Activated B cell treated with CpG ODN at 0.5 μM for 24 hours (primary cell): ENCODE measurements at regions of chr22 and their contacts with region 1.

Region 1: DNA sequence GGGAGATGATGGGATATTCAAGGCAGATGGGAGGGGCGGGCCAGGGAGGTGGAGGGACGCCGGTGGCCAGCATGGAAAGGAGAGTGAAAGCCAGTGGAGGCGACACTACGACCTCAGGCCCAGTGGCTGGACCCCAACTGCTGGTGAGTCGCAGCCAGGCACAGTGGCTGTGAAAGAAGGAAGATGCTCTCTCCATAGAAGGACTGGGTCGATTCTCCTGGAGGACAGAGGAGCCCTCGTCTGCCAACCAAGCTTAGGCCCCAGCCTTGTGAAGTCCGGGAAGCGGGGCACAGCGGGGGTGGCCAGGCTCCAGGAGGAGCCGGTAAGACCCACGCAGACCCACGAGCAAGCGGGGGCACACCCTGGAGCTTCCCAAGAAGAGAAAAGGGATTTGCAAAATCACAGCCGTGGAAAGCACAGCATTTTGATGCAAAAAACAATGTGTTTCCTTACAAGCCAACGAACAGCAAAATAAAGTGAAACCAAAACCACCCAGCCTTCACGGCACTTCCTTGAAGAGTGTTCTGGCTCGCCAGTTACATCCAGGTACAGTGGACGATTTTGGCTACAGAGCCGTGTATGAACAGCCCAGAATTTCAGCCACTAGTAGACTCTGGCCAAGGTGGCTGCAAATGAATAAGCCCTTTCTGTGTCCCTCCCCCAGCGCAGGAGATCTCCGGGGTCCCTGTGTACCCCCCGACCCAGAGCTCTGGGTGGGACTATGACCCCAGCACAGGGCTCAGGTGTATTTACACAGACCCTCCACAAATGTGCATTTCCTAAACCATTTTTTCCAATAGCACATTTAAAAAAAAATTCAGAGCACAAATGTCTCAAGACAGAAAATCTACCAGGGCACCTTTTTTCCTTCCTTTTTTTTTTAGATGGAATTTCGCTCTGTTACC is 96.9 kb downstream of the TRMU start:
- DNase-seq: peak; percentile 34
- ATAC-seq: peak; percentile 62
- H3K4me3 Mint-ChIP-seq: peak overlapping the region; percentile 94
- H3K27ac Mint-ChIP-seq: peak overlapping the region; percentile 98
- H3K4me1 Mint-ChIP-seq: peaks cover 40% of the 10 kb centered on the region
- H3K27me3 Mint-ChIP-seq: no peaks in the 10 kb centered on the region
- CTCF ChIP-seq: no peak

Region 2: DNA sequence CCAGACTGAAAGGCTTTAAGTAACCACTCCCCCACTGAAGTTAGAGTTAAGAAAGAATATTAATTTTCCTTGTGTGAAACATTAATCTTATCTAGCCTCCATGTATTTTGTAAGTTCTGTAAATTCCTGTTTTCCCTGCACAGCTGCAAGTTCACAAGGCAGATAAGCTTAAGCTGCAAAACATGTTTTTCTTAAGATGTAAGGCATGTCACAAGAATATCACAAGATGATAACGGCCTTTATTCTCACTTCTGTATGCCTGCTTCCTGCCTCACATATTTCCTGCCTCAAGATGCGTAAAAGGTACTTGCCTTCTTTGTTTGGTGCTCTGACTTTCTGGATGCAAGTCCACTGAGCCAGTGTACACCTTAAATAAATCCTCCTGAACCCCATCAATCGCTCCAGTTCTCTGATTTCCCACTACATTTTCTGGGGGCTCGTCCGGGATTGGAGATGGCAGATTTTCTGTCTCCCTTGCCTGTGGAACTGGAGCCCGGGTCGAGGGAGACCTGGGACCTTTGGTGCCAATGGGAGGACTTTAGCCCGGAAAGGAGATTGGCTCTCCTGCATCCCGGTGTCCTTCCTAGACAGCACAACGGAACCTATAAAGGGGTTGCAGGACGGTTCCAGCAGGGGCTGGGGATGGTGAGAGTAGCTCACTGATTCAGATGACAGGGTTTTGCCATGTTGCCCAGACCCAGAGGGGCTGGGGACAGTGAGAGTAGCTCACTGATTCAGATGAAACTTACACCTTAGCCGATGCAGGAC is 251.9 kb before region 1 on chr22:
- CTCF ChIA-PET with region 1: no interaction called
- POLR2A ChIA-PET with region 1: no interaction called
- intact Hi-C with region 1: no loop called
- DNase-seq: no peak
- ATAC-seq: no peak
- H3K4me3 Mint-ChIP-seq: no peak overlapping the region
- H3K27ac Mint-ChIP-seq: no peak overlapping the region
- H3K4me1 Mint-ChIP-seq: no peaks in the 10 kb centered on the region
- H3K27me3 Mint-ChIP-seq: no peaks in the 10 kb centered on the region
- CTCF ChIP-seq: no peak

Region 3: GRCh38 chr22:46476547-46476941 is 44.1 kb after region 1 on chr22:
- CTCF ChIA-PET with region 1: no interaction called
- POLR2A ChIA-PET with region 1: interaction called, 3 read pairs
- intact Hi-C with region 1: loop called (anchors 5 kb)
- DNase-seq: no peak
- ATAC-seq: peak; percentile 90
- H3K4me3 Mint-ChIP-seq: no peak overlapping the region
- H3K27ac Mint-ChIP-seq: peak overlapping the region; percentile 79
- H3K4me1 Mint-ChIP-seq: peaks cover 23% of the 10 kb centered on the region
- H3K27me3 Mint-ChIP-seq: peaks cover 19% of the 10 kb centered on the region
- CTCF ChIP-seq: no peak

Region 4: GRCh38 chr22:46649141-46650077 is 217.0 kb after region 1 on chr22:
- CTCF ChIA-PET with region 1: no interaction called
- POLR2A ChIA-PET with region 1: no interaction called
- intact Hi-C with region 1: no loop called
- DNase-seq: no peak
- ATAC-seq: no peak
- H3K4me3 Mint-ChIP-seq: no peak overlapping the region
- H3K27ac Mint-ChIP-seq: no peak overlapping the region
- H3K4me1 Mint-ChIP-seq: peaks cover 48% of the 10 kb centered on the region
- H3K27me3 Mint-ChIP-seq: no peaks in the 10 kb centered on the region
- CTCF ChIP-seq: no peak